Dendritic cell treated with granulocyte-macrophage colony-stimulating factor and Interleukin-4, amounts not matched to agents 40 ng/mL and 50 ng/mL, for 4 days (primary cell): ENCODE measurements at regions of chr14 and their contacts with region 1.

Region 1: DNA sequence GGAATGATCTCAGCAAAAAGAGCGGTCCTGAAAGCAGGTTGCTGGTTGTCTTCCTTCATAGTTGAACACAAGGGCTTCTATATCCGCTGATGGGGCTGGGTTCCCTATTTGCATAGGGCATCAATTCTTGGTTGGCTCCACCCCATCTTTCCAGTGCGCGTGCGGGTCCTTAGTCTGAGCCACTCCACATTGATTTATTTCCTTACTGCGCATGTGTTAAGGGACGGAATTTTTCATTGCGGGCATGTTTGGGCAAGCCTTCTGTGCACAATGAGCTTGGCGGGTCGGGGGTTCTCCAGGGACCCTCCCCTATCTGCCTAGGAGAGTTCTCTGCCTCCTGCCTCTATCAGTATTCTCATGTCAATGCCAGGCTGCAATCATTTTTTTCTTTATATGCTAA is 21.2 kb upstream of the DLGAP5 start:
- H3K4me3 Mint-ChIP-seq: no peak overlapping the region
- H3K27ac Mint-ChIP-seq: no peak overlapping the region
- H3K4me1 Mint-ChIP-seq: no peaks in the 10 kb centered on the region
- H3K27me3 Mint-ChIP-seq: peaks cover 2% of the 10 kb centered on the region

Region 2: DNA sequence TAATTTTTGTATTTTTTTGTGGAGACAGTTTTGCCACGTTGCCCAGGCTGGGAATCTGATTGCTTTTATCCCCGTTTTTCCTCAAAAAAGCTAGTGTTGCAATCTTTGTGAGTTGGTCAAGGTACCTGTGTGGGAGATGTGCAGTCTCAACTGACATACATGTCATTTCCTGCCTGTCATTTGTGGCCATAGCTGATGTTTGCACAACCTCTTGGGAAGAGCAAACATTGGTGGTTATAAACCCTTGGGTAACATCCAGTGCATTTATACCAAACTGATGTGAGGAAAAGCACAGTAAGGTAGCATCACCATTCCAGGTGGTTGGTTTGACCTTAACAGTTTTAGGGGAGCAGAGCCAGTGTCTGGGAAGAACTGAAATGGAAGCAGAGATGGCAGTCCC is 144.3 kb after region 1 on chr14:
- intact Hi-C with region 1: loop called (anchors 5 kb)
- H3K4me3 Mint-ChIP-seq: no peak overlapping the region
- H3K27ac Mint-ChIP-seq: no peak overlapping the region
- H3K4me1 Mint-ChIP-seq: no peaks in the 10 kb centered on the region
- H3K27me3 Mint-ChIP-seq: no peaks in the 10 kb centered on the region

Region 3: GRCh38 chr14:55430024-55430690 is 217.5 kb after region 1 on chr14:
- intact Hi-C with region 1: loop called (anchors 1 kb)
- H3K4me3 Mint-ChIP-seq: no peak overlapping the region
- H3K27ac Mint-ChIP-seq: no peak overlapping the region
- H3K4me1 Mint-ChIP-seq: peaks cover 11% of the 10 kb centered on the region
- H3K27me3 Mint-ChIP-seq: peaks cover 13% of the 10 kb centered on the region